ENCODE measurements at regions of chr11 and their contacts with region 1.

Region 1: GRCh38 chr11:57499413-57499982 is 16.0 kb downstream of the SLC43A1 start:
- DNase-seq: peak; percentile 89 to 98
- H3K4me3 ChIP-seq: peak overlapping the region; percentile 5 to 48 (median 36); a peak in 5 of 8 replicates
- H3K27ac ChIP-seq: no peak overlapping the region
- H3K4me1 ChIP-seq: peaks cover 7 to 18% (median 14%) of the 10 kb centered on the region in 4 experiments
- H3K27me3 ChIP-seq: no peaks in the 10 kb centered on the region
- CTCF ChIP-seq: no peak
- EP300 ChIP-seq: no peak
- POLR2A ChIP-seq: peak in 1 of 2 experiments; percentile 24; a peak in 2 of 3 replicates
- RAD21 ChIP-seq: peak; percentile 1 to 6; a peak in 2 of 4 replicates

Region 2: GRCh38 chr11:57515332-57516060 is 16.0 kb after region 1 on chr11 and contains the start of gene SLC43A1:
- CTCF ChIA-PET with region 1: interaction called, 1,146 read pairs
- POLR2A ChIA-PET with region 1: interaction called, 79 read pairs
- DNase-seq: peak in 1 of 2 experiments; percentile 66
- H3K4me3 ChIP-seq: peak within 1 kb of the TSS; percentile 49 to 76 (median 68)
- H3K27ac ChIP-seq: no peak within 1 kb of the TSS
- H3K4me1 ChIP-seq: peaks cover 3 to 10% (median 5%) of the 10 kb centered on the region in 4 experiments
- H3K27me3 ChIP-seq: peaks cover 0 to 21% (median 10%) of the 10 kb centered on the region in 4 experiments; a peak in 4 of 7 replicates
- CTCF ChIP-seq: no peak
- EP300 ChIP-seq: no peak
- POLR2A ChIP-seq: no peak; a peak in 1 of 3 replicates
- RAD21 ChIP-seq: 0 out of 4 replicates have a peak, but pooled peaks of 1 of the 2 experiments have one; percentile 0
- total RNA-seq, gene SLC43A1: 30.1 and 34.5 TPM in 2 replicates

Region 3: DNA sequence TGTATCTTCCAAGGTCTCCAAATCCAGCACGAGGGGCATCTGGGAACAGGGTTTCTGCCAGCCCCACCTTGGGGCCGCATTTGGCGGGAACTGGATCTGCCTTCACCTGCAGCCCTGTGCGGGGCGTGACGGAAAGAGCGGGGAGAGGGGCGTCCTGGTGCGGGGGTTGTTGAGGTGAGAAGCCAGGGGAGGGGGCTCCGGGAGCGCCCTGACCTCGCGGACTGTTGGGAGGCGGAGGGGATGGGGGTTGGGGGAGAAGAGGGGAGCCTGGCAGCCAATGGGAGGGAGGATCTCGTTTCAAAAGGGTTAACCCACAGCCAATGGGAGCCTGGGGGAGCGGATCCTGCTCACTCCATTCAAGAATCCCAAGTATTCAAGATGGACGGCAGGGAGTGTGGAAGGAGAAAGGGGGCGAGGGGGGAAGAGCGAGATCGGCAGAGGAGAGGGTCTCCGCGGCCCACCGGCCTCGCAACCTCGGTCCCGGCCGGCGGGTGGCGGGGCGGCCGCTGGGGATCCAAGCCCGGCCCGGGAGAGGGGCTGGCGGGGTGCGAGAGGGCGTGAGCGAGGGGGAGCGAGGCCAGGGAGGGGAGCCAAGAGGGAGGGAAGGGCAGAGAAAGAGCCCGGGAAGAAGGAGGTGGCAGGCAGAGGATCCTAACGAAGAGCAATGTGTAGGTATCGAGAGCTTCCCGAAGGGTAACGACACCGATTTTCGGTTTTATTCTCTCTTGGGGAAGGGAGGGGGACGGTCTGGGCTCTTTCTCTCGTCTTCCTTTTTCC is 138.7 kb after region 1 on chr11:
- CTCF ChIA-PET with region 1: interaction called, 15 read pairs
- POLR2A ChIA-PET with region 1: interaction called, 19 read pairs
- DNase-seq: peak; percentile 86 to 89
- H3K4me3 ChIP-seq: peak overlapping the region; percentile 94 to 100 (median 98)
- H3K27ac ChIP-seq: peak overlapping the region; percentile 98
- H3K4me1 ChIP-seq: peaks cover 11 to 31% (median 22%) of the 10 kb centered on the region in 4 experiments
- H3K27me3 ChIP-seq: no peaks in the 10 kb centered on the region; a peak in 1 of 7 replicates
- CTCF ChIP-seq: no peak
- EP300 ChIP-seq: peak in 1 of 2 experiments; percentile 64; a peak in 1 of 3 replicates
- POLR2A ChIP-seq: peak; percentile 94 to 95
- RAD21 ChIP-seq: no peak

Measured in H1 (cell line).